ENCODE measurements at regions of chr2 and their contacts with region 1.

Region 1: GRCh38 chr2:219155054-219155644 is 5.5 kb downstream of the NHEJ1 start:
- H3K4me3 ChIP-seq: no peak overlapping the region
- H3K27ac ChIP-seq: no peak overlapping the region
- H3K4me1 ChIP-seq: 0 out of 2 replicates have a peak, but pooled peaks cover 2% of the 10 kb centered on the region
- CTCF ChIP-seq: no peak

Region 2: DNA sequence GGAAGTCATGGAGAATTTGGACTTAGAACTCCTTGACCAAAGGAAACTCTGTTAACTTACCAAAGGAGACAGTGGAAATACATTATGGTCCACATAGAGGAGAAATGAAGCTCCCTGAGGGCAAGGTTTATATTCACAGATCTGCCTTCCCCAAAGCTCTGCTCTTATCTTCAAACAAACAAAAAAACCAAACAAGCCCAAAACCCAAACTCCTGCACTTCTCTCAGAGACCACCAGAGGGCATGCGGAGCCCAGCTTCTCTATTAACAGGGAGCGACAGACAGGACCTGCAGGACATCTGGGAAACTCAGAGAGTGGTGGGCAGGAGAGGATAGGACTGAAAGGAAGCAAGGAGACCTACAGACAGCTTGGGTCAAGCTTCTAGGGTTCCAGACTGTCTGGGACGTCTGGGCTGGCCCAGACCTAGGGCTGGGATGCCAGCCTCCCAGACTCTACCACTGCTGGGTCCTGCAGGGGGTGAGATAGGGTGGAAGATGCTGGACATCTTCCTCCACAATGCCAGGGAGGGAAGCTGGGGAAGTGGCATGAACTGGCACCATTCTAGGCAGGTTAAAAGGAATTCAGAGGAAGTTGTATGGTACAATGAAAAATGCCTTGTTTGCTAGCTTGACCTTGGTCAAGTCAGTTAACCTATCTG is 278.5 kb before region 1 on chr2:
- CTCF ChIA-PET with region 1: interaction called, 22 read pairs
- POLR2A ChIA-PET with region 1: no interaction called
- H3K4me3 ChIP-seq: no peak overlapping the region
- H3K27ac ChIP-seq: no peak overlapping the region
- H3K4me1 ChIP-seq: no peaks in the 10 kb centered on the region
- CTCF ChIP-seq: peak; percentile 84

Region 3: GRCh38 chr2:218995972-218996711 is 159.0 kb before region 1 on chr2:
- CTCF ChIA-PET with region 1: interaction called, 31 read pairs
- POLR2A ChIA-PET with region 1: no interaction called
- H3K4me3 ChIP-seq: peak overlapping the region; percentile 27
- H3K27ac ChIP-seq: no peak overlapping the region
- H3K4me1 ChIP-seq: no peaks in the 10 kb centered on the region
- CTCF ChIP-seq: peak; percentile 94

Region 4: GRCh38 chr2:219010162-219010756 is 144.9 kb before region 1 on chr2:
- CTCF ChIA-PET with region 1: interaction called, 17 read pairs
- POLR2A ChIA-PET with region 1: no interaction called
- H3K4me3 ChIP-seq: no peak overlapping the region
- H3K27ac ChIP-seq: no peak overlapping the region
- H3K4me1 ChIP-seq: no peaks in the 10 kb centered on the region
- CTCF ChIP-seq: peak; percentile 79

Region 5: GRCh38 chr2:219057709-219058540 is 97.2 kb before region 1 on chr2:
- CTCF ChIA-PET with region 1: interaction called, 14 read pairs
- POLR2A ChIA-PET with region 1: no interaction called
- H3K4me3 ChIP-seq: no peak overlapping the region
- H3K27ac ChIP-seq: no peak overlapping the region
- H3K4me1 ChIP-seq: no peaks in the 10 kb centered on the region; the same call in 1 of the 2 replicates
- CTCF ChIP-seq: peak; percentile 93

Region 6: GRCh38 chr2:219104107-219105035 is 50.8 kb before region 1 on chr2:
- CTCF ChIA-PET with region 1: interaction called, 27 read pairs
- POLR2A ChIA-PET with region 1: no interaction called
- H3K4me3 ChIP-seq: no peak overlapping the region
- H3K27ac ChIP-seq: no peak overlapping the region
- H3K4me1 ChIP-seq: no peaks in the 10 kb centered on the region
- CTCF ChIP-seq: peak; percentile 31

Region 7: GRCh38 chr2:219294356-219295351 is 139.5 kb after region 1 on chr2:
- CTCF ChIA-PET with region 1: interaction called, 71 read pairs
- POLR2A ChIA-PET with region 1: no interaction called
- H3K4me3 ChIP-seq: peak overlapping the region; percentile 56
- H3K27ac ChIP-seq: peak overlapping the region; percentile 45; the same call in 1 of the 2 replicates
- H3K4me1 ChIP-seq: no peaks in the 10 kb centered on the region; the same call in 1 of the 2 replicates
- CTCF ChIP-seq: peak; percentile 88

Measured in HEK293 (cell line).